Naive thymus-derived CD4-positive, alpha-beta T cell (primary cell): ENCODE measurements at regions of chr14 and their contacts with region 1.

Region 1: GRCh38 chr14:50038398-50039119 is 77.8 kb downstream of the VCPKMT start:
- DNase-seq: peak in 1 of 9 donors; percentile 69
- ATAC-seq: peak; percentile 79
- H3K4me3 ChIP-seq: no peak overlapping the region
- H3K4me3 Mint-ChIP-seq: peak overlapping the region in 3 of 10 donors; percentile 40 to 59 (median 53)
- H3K27ac ChIP-seq: no peak overlapping the region
- H3K27ac Mint-ChIP-seq: peak overlapping the region in 8 of 9 donors; percentile 36 to 95 (median 83)
- H3K4me1 ChIP-seq: peaks cover 46 to 52% of the 10 kb centered on the region in 2 donors
- H3K4me1 Mint-ChIP-seq: peaks cover 33 to 68% (median 54%) of the 10 kb centered on the region in 7 donors
- H3K27me3 ChIP-seq: no peaks in the 10 kb centered on the region
- H3K27me3 Mint-ChIP-seq: no peaks in the 10 kb centered on the region

Region 2: GRCh38 chr14:49867831-49868723 is 170.5 kb before region 1 on chr14:
- CTCF ChIA-PET with region 1: interaction called, 4 read pairs
- POLR2A ChIA-PET with region 1: interaction called, 34 read pairs
- intact Hi-C with region 1: loop called in 1 of 2 experiments (anchors 1 kb)
- DNase-seq: peak; percentile 87 to 97 (median 93)
- ATAC-seq: peak; percentile 96
- H3K4me3 ChIP-seq: peak overlapping the region; percentile 75
- H3K4me3 Mint-ChIP-seq: peak overlapping the region; percentile 79 to 95 (median 90)
- H3K27ac ChIP-seq: peak overlapping the region; percentile 91
- H3K27ac Mint-ChIP-seq: peak overlapping the region; percentile 93 to 99 (median 97)
- H3K4me1 ChIP-seq: peaks cover 31 to 35% of the 10 kb centered on the region in 2 donors
- H3K4me1 Mint-ChIP-seq: peaks cover 9 to 31% (median 17%) of the 10 kb centered on the region in 7 donors
- H3K27me3 ChIP-seq: no peaks in the 10 kb centered on the region
- H3K27me3 Mint-ChIP-seq: no peaks in the 10 kb centered on the region

Region 3: DNA sequence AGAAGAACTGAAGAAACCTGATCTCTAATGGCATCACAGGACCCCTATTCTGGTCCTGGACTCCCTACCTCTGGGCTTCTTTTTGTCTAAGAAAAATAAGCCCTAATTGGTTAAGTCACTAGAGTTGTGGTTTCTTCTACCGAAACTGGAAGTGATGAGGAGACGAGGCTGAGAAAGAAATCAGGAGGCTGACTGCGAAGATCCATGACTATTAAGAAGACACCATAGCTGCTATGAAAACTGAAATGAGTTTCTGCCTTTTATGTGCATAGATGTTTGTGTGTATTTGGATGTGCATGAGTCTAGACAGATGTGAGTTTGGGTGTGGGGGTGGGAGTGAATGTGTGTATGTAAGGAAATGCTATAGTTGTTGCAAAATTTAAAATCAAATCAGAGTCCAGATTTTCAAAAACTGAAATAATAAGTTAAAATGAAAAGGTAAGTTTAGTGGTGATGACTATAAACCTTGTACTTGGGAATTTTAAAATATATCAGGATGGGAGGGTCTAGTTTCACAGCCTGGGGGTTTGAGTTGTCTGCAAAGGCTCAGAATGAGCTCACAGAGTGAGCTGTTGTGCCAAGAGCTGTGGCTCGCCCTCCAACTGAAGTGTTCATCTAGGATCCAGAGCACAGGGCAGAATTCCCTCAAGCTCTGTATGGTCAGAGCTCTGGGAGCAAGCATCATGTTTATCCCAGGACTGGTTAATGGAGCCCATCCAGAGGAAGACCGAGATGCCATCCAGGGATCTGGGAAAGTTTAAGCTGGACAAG is 17.1 kb before region 1 on chr14:
- CTCF ChIA-PET with region 1: interaction called, 4 read pairs
- POLR2A ChIA-PET with region 1: interaction called, 7 read pairs
- intact Hi-C with region 1: loop called (anchors 1 to 2 kb)
- DNase-seq: peak in 1 of 9 donors; percentile 23
- ATAC-seq: no peak
- H3K4me3 ChIP-seq: no peak overlapping the region
- H3K4me3 Mint-ChIP-seq: peak overlapping the region in 9 of 10 donors; percentile 1 to 68 (median 49)
- H3K27ac ChIP-seq: no peak overlapping the region
- H3K27ac Mint-ChIP-seq: peak overlapping the region in 5 of 9 donors; percentile 0 to 81 (median 74)
- H3K4me1 ChIP-seq: peaks cover under 1 to 5% of the 10 kb centered on the region in 2 donors
- H3K4me1 Mint-ChIP-seq: peaks cover 12 to 42% (median 28%) of the 10 kb centered on the region in 7 donors
- H3K27me3 ChIP-seq: no peaks in the 10 kb centered on the region
- H3K27me3 Mint-ChIP-seq: no peaks in the 10 kb centered on the region

Region 4: DNA sequence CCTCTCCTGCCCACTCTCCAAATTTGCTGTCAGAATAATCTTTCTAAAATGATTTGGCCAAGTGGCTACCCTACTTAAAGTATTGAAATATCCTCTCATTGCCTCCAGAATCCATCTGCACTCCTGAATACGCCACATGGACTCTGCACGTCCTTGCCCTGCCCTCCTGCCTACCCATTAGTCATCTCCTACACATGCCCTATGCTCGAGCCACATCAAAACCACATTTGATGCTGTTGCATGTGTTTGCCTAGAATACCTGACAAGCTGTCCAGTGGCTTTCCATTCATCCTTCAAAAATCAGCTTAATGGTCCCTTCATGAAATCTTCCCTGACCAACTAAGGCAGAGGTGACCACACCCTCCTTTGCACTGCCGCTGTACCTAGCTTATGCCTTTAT is 60.8 kb after region 1 on chr14:
- CTCF ChIA-PET with region 1: interaction called, 8 read pairs
- POLR2A ChIA-PET with region 1: interaction called, 29 read pairs
- intact Hi-C with region 1: loop called in 1 of 2 experiments (anchors 1 kb)
- DNase-seq: no peak
- ATAC-seq: no peak
- H3K4me3 ChIP-seq: no peak overlapping the region
- H3K4me3 Mint-ChIP-seq: peak overlapping the region in 9 of 10 donors; percentile 9 to 61 (median 38)
- H3K27ac ChIP-seq: no peak overlapping the region
- H3K27ac Mint-ChIP-seq: peak overlapping the region; percentile 13 to 87 (median 79)
- H3K4me1 ChIP-seq: peaks cover 23 to 67% of the 10 kb centered on the region in 2 donors
- H3K4me1 Mint-ChIP-seq: peaks cover 39 to 92% (median 76%) of the 10 kb centered on the region in 7 donors
- H3K27me3 ChIP-seq: no peaks in the 10 kb centered on the region
- H3K27me3 Mint-ChIP-seq: peaks cover 0 to 5% (median 0%) of the 10 kb centered on the region in 5 donors

Region 5: GRCh38 chr14:50363714-50364111 is 325.2 kb after region 1 on chr14:
- CTCF ChIA-PET with region 1: no interaction called
- POLR2A ChIA-PET with region 1: no interaction called
- intact Hi-C with region 1: no loop called
- DNase-seq: peak in 8 of 9 donors; percentile 36 to 68 (median 57)
- ATAC-seq: peak; percentile 94
- H3K4me3 ChIP-seq: peak overlapping the region; percentile 67
- H3K4me3 Mint-ChIP-seq: peak overlapping the region; percentile 80 to 94 (median 90)
- H3K27ac ChIP-seq: peak overlapping the region; percentile 72
- H3K27ac Mint-ChIP-seq: peak overlapping the region; percentile 90 to 95 (median 93)
- H3K4me1 ChIP-seq: peaks cover 10 to 12% of the 10 kb centered on the region in 2 donors
- H3K4me1 Mint-ChIP-seq: peaks cover 23 to 58% (median 43%) of the 10 kb centered on the region in 7 donors
- H3K27me3 ChIP-seq: no peaks in the 10 kb centered on the region
- H3K27me3 Mint-ChIP-seq: no peaks in the 10 kb centered on the region